Panc1 (cell line): ENCODE measurements at regions of chr2 and their contacts with region 1.

Region 1: GRCh38 chr2:121356058-121356640 is 71.1 kb upstream of the TFCP2L1 start:
- DNase-seq: peak; percentile 35
- ATAC-seq: peak; percentile 76
- H3K4me3 ChIP-seq: no peak overlapping the region
- H3K27ac ChIP-seq: no peak overlapping the region
- H3K4me1 ChIP-seq: peaks cover 13% of the 10 kb centered on the region
- H3K27me3 ChIP-seq: no peaks in the 10 kb centered on the region
- CTCF ChIP-seq: peak; percentile 87

Region 2: DNA sequence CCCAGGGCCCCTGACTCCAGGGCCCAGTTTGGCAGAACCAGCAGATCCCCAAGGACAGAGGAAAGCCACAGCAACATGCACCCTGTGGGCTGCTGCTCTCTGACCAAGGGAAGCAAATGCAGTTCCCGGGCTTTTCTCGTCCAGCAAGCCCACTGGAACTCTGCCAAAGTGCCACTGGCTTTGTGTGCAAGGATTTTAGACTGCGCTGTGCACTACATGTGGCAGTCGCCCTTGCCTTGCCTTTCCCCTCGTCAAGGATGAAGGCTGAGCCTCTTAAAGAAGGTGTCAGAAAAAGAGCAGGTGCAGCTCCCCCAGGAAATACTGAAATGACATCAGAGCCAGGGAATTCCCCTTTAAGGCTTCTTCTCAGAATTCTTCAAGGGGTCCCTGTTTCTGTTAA is 270.3 kb before region 1 on chr2:
- CTCF ChIA-PET with region 1: interaction called, 10 read pairs
- POLR2A ChIA-PET with region 1: no interaction called
- in situ Hi-C with region 1: no loop called
- intact Hi-C with region 1: loop called (anchors 10 kb)
- DNase-seq: no peak
- ATAC-seq: no peak
- H3K4me3 ChIP-seq: no peak overlapping the region
- H3K27ac ChIP-seq: no peak overlapping the region
- H3K4me1 ChIP-seq: no peaks in the 10 kb centered on the region
- H3K27me3 ChIP-seq: no peaks in the 10 kb centered on the region
- CTCF ChIP-seq: no peak

Region 3: GRCh38 chr2:121418494-121419058 is 62.4 kb after region 1 on chr2:
- CTCF ChIA-PET with region 1: no interaction called
- POLR2A ChIA-PET with region 1: no interaction called
- in situ Hi-C with region 1: no loop called
- intact Hi-C with region 1: no loop called
- DNase-seq: no peak
- ATAC-seq: no peak
- H3K4me3 ChIP-seq: no peak overlapping the region
- H3K27ac ChIP-seq: no peak overlapping the region
- H3K4me1 ChIP-seq: no peaks in the 10 kb centered on the region
- H3K27me3 ChIP-seq: no peaks in the 10 kb centered on the region
- CTCF ChIP-seq: no peak